ENCODE measurements at regions of chr2 and their contacts with region 1.

Region 1: GRCh38 chr2:191705084-191705483 is 27.1 kb downstream of the NABP1 start:
- DNase-seq: no peak
- ATAC-seq: no peak
- H3K4me3 ChIP-seq: no peak overlapping the region
- H3K4me3 Mint-ChIP-seq: no peak overlapping the region
- H3K27ac ChIP-seq: no peak overlapping the region
- H3K27ac Mint-ChIP-seq: no peak overlapping the region
- H3K4me1 ChIP-seq: no peaks in the 10 kb centered on the region
- H3K4me1 Mint-ChIP-seq: no peaks in the 10 kb centered on the region
- H3K27me3 ChIP-seq: no peaks in the 10 kb centered on the region
- H3K27me3 Mint-ChIP-seq: no peaks in the 10 kb centered on the region
- CTCF ChIP-seq: no peak

Region 2: DNA sequence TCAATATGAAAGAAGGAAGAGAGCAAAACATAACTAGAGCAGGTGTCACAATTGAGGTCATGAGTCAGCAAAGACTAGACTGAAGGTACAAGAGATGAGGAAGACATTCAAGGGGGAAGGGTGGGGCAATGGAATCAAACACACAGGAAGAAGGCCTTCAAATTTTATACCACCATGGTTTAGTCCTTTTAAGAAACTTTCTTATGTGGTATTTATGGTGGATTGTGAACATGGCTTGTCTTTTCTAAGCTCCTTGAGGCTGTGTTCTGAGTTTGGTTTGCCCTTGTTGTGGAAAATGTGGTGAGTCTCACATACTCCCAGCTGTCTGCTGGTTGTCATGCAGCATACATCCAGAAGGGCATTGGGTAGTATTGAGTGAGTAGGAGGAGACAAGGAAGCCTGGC is 34.9 kb after region 1 on chr2:
- CTCF ChIA-PET with region 1: no interaction called
- POLR2A ChIA-PET with region 1: no interaction called
- intact Hi-C with region 1: no loop called
- DNase-seq: peak in 8 of 9 experiments; percentile 12 to 89 (median 45)
- ATAC-seq: peak; percentile 89
- H3K4me3 ChIP-seq: no peak overlapping the region
- H3K4me3 Mint-ChIP-seq: no peak overlapping the region
- H3K27ac ChIP-seq: peak overlapping the region in 1 of 2 experiments; percentile 33
- H3K27ac Mint-ChIP-seq: peak overlapping the region; percentile 66
- H3K4me1 ChIP-seq: peaks cover 19% of the 10 kb centered on the region
- H3K4me1 Mint-ChIP-seq: peaks cover 14% of the 10 kb centered on the region
- H3K27me3 ChIP-seq: no peaks in the 10 kb centered on the region
- H3K27me3 Mint-ChIP-seq: peaks cover 13% of the 10 kb centered on the region
- CTCF ChIP-seq: no peak

Region 3: GRCh38 chr2:192151853-192152252 is 446.8 kb after region 1 on chr2:
- CTCF ChIA-PET with region 1: no interaction called
- POLR2A ChIA-PET with region 1: no interaction called
- intact Hi-C with region 1: loop called in 1 of 2 experiments (anchors 5 kb)
- DNase-seq: no peak
- ATAC-seq: no peak
- H3K4me3 ChIP-seq: no peak overlapping the region
- H3K4me3 Mint-ChIP-seq: no peak overlapping the region
- H3K27ac ChIP-seq: no peak overlapping the region
- H3K27ac Mint-ChIP-seq: no peak overlapping the region
- H3K4me1 ChIP-seq: no peaks in the 10 kb centered on the region
- H3K4me1 Mint-ChIP-seq: no peaks in the 10 kb centered on the region
- H3K27me3 ChIP-seq: no peaks in the 10 kb centered on the region
- H3K27me3 Mint-ChIP-seq: peaks cover 5% of the 10 kb centered on the region
- CTCF ChIP-seq: no peak

Measured in CD8-positive, alpha-beta T cell (primary cell).